ENCODE measurements at regions of chr1 and their contacts with region 1.

Region 1: GRCh38 chr1:100597061-100597741 is 59.3 kb downstream of the GPR88 start:
- ATAC-seq: no peak
- H3K4me3 ChIP-seq: no peak overlapping the region
- H3K27ac ChIP-seq: no peak overlapping the region
- H3K4me1 ChIP-seq: no peaks in the 10 kb centered on the region

Region 2: GRCh38 chr1:99305626-99306025 is 1291.6 kb before region 1 on chr1:
- in situ Hi-C with region 1: no loop called
- ATAC-seq: no peak
- H3K4me3 ChIP-seq: no peak overlapping the region
- H3K27ac ChIP-seq: no peak overlapping the region
- H3K4me1 ChIP-seq: no peaks in the 10 kb centered on the region

Region 3: DNA sequence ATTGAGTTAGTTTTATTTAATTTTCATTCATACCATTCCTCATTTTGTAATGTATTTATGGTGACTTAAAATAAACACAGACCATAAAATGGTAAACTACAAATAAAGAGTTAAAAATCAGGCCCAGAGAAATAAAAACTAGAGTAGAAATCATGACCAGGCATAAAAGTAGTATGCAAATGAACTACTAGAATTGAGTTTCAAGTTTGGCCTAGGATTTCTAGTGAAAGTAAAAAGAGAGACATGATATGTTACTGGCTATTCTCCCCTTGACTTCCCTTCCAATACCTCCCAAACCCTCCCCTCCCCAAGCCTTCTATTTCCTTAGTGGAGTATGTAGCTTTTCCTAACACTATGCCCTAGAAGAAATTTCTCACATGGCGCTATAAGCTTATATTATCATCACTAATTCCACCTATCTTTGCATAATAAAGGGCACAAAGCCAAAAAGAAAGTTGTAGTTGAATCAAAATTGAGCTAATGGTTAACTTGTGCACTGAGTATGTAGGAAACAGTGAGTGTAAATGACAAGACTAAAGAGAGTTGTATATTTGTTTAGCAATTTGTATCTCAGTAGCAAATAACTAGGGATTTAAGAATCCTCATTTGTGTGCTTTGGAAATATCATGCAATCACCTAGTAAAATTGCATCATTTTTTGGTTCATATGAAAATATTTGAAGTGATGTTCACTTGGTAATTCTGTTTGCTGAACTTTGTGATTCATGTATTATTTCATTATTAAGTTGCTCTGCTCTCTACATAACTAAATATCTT is 274.6 kb before region 1 on chr1:
- in situ Hi-C with region 1: no loop called
- ATAC-seq: peak in 1 of 8 experiments; percentile 29
- H3K4me3 ChIP-seq: no peak overlapping the region
- H3K27ac ChIP-seq: no peak overlapping the region
- H3K4me1 ChIP-seq: peaks cover 5 to 6% of the 10 kb centered on the region in 2 donors

Region 4: DNA sequence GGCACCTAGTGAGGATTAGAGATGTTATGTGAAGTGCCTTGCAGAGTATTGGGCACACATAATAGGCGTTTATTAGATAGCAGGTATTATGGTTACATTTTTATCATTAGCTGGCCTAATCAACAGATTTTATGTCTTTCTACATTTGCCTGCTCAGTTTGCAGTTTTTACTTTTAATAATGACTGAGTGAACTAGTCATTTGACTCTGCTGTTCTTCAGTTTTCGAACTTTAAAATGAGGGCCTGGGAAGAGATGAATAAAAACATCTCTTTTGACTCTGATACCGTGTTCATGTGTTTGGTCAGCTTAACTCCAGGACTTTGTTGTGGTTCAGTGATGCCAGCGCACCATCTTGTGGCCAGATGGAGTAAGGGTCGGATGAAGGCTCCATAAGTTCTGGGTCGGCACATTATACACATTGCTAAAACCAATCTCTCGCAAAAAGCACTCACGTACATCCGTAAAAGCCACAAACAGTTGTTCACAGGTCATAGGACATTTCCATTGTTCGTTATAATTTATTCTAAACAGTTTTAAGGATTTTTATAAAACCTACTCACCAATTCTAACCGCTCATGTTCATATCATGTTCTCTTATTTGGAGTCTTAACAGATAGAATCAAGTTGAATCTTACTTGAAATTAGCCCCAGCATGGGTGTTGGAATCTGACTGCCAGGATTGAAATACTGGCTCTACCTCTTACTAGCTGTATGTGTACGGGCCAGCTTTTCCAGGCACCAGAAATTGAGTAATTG is 137.7 kb before region 1 on chr1:
- in situ Hi-C with region 1: loop called in 1 of 9 experiments (anchors 25 kb)
- ATAC-seq: peak; percentile 85 to 98 (median 86)
- H3K4me3 ChIP-seq: no peak overlapping the region
- H3K27ac ChIP-seq: no peak overlapping the region
- H3K4me1 ChIP-seq: peaks cover 18 to 21% of the 10 kb centered on the region in 2 donors

Region 5: DNA sequence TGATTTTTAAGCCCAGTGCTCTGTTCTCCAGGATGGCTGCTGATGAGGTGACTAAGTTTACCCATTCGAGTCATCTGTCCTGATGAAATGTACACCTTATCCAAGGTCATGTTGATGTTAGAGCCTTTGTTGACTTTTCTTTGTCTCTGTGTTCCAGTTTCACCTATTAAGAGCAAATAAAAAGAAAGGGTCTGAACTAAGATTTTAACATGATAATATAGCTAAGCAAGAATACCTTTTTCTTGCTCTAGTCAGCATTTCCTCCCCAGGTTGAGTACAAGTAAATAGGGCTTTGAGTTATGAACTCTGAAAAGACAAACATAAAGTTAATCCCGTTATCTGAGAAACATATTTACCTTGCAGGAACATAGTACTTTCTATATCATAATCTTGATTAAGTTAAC is 111.3 kb before region 1 on chr1:
- in situ Hi-C with region 1: no loop called
- ATAC-seq: no peak
- H3K4me3 ChIP-seq: no peak overlapping the region
- H3K27ac ChIP-seq: no peak overlapping the region
- H3K4me1 ChIP-seq: no peaks in the 10 kb centered on the region